K562 (cell line): ENCODE measurements at regions of chr1 and their contacts with region 1.

Region 1: DNA sequence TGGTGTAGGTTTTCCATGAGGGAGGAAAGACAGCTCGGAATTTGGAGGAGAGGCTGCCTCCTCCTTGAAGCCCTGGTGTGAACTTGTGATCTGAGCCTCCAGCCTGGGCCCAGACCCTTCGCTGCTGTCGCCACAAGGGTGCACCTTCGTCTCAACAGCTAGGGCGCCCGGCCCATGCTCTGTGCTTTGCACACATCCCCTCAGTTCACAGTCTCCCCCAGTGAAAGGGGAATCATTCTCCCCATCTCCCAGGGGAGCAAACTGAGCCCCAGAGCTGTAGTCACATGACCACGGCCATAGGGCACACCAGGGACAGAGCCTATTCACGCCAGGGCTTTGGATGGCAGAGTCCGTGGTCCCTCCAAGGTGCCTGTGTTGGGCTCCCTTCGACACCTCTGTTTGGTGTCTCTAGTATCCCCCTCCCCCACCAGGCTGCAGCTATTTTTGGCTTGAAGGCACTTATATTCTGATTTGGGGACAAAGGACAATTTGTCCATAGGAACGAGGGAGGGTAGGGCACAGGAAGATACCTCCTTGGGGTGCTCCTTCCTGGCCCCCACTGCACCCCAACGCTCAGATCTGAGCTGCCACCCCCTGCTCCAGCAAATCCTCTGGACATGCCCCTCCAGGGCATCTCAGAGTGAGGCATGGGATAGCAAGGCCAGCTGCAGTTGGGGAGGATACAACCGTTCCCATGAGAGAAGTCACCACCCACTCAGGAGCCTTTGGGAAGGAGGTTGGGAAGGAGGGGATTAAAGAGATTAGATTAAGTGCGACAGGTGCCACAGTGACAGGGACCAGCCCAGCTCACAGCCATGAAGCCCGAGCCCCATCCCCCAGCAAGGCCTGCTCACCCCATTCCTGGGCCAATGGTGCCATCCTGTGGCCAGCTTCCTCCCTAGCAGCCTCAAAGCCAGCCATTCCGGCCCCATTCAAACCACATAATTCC is 15.7 kb downstream of the MATN1 start:
- DNase-seq: peak; percentile 84 to 92 (median 91)
- ATAC-seq: peak; percentile 97
- H3K4me3 ChIP-seq: no peak overlapping the region
- H3K27ac ChIP-seq: no peak overlapping the region
- H3K4me1 ChIP-seq: peaks cover 0 to 6% of the 10 kb centered on the region in 2 experiments; a peak in 2 of 5 replicates
- H3K27me3 ChIP-seq: peaks cover 10 to 48% of the 10 kb centered on the region in 2 experiments; a peak in 4 of 5 replicates
- CTCF ChIP-seq: peak; percentile 93 to 98 (median 98)
- EP300 ChIP-seq: peak; percentile 36
- POLR2A ChIP-seq: no peak
- RAD21 ChIP-seq: peak; percentile 98 to 99

Region 2: DNA sequence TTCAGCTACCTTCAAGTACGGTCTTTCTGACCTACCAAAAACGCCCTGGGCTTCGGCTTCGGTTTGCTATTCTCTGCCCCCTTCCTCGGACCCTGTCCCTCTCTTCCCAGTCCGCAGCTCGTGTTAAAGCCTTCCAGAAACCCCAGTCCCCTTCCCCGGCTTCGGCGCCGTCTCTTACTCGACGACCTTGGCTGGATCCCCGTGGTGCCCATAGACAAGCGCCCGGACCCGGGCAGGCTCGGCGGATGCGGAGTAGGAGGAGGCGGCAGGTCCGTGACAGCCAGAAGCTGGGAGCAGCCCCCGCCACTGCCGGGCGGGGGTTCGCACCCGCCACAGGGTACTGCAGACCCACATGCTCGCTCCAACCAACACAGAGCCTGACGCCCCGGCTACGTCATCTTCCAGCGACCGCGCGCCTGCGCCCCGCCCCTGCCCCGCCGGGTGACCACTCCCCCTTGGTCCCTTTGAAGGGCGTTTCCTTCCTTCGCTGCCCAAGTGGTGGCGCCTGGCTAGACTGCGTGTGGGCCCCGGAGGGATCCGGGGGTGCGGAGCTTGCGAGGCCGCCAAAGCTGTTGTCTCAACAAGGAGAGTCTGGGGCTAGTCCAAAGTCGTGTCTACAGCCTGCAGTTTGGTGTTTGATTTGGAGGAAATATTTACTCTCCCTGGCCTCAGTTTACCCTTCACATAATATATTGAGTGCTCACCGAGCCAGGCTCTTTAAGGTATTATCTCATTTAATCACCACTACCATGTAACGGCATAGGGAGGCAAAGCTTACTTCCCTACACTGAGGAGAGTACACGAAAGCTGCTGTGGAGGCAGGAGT is 1476.9 kb before region 1 on chr1 and contains the start of gene MECR:
- CTCF ChIA-PET with region 1: interaction called, 5 read pairs
- POLR2A ChIA-PET with region 1: no interaction called
- in situ Hi-C with region 1: loop called (anchors 10 kb)
- intact Hi-C with region 1: no loop called
- DNase-seq: peak; percentile 98 to 99 (median 99)
- ATAC-seq: peak; percentile 97
- H3K4me3 ChIP-seq: peak within 1 kb of the TSS; percentile 78
- H3K27ac ChIP-seq: peak within 1 kb of the TSS; percentile 75
- H3K4me1 ChIP-seq: peaks cover 7 to 12% of the 10 kb centered on the region in 2 experiments; a peak in 3 of 5 replicates
- H3K27me3 ChIP-seq: no peaks in the 10 kb centered on the region
- CTCF ChIP-seq: peak; percentile 42 to 58 (median 47)
- EP300 ChIP-seq: peak; percentile 3; the same call in 1 of the 2 replicates
- POLR2A ChIP-seq: peak; percentile 91
- RAD21 ChIP-seq: peak in 1 of 2 experiments; percentile 3; a peak in 1 of 4 replicates
- polyA plus RNA-seq, gene MECR: 10.4 to 18.0 TPM

Region 3: GRCh38 chr1:29235955-29236684 is 1471.6 kb before region 1 on chr1 and contains the start of gene PTPRU:
- CTCF ChIA-PET with region 1: interaction called, 5 read pairs
- POLR2A ChIA-PET with region 1: no interaction called
- in situ Hi-C with region 1: no loop called
- intact Hi-C with region 1: loop called (anchors 5 kb)
- DNase-seq: peak; percentile 85 to 97 (median 94)
- ATAC-seq: peak; percentile 96
- H3K4me3 ChIP-seq: peak within 1 kb of the TSS; percentile 44
- H3K27ac ChIP-seq: no peak within 1 kb of the TSS
- H3K4me1 ChIP-seq: peaks cover 5 to 27% of the 10 kb centered on the region in 2 experiments; a peak in 3 of 5 replicates
- H3K27me3 ChIP-seq: peaks cover 23 to 30% of the 10 kb centered on the region in 2 experiments; a peak in 4 of 5 replicates
- CTCF ChIP-seq: peak; percentile 57 to 95 (median 91)
- EP300 ChIP-seq: no peak
- POLR2A ChIP-seq: no peak
- RAD21 ChIP-seq: peak; percentile 93 to 98
- polyA plus RNA-seq, gene PTPRU: 0.01 to 0.03 TPM

Region 4: GRCh38 chr1:29379443-29380073 is 1328.1 kb before region 1 on chr1:
- CTCF ChIA-PET with region 1: interaction called, 3 read pairs
- POLR2A ChIA-PET with region 1: no interaction called
- in situ Hi-C with region 1: no loop called
- intact Hi-C with region 1: loop called (anchors 10 kb)
- DNase-seq: peak; percentile 60 to 70 (median 64)
- ATAC-seq: peak; percentile 71
- H3K4me3 ChIP-seq: no peak overlapping the region
- H3K27ac ChIP-seq: no peak overlapping the region
- H3K4me1 ChIP-seq: no peaks in the 10 kb centered on the region
- H3K27me3 ChIP-seq: peaks cover 0 to 13% of the 10 kb centered on the region in 2 experiments; a peak in 1 of 5 replicates
- CTCF ChIP-seq: peak; percentile 85 to 95 (median 88)
- EP300 ChIP-seq: 0 out of 2 replicates have a peak, but pooled peaks have one; percentile 27
- POLR2A ChIP-seq: no peak
- RAD21 ChIP-seq: peak; percentile 86 to 98

Region 5: GRCh38 chr1:29513357-29513756 is 1194.3 kb before region 1 on chr1:
- CTCF ChIA-PET with region 1: no interaction called
- POLR2A ChIA-PET with region 1: no interaction called
- in situ Hi-C with region 1: no loop called
- intact Hi-C with region 1: loop called (anchors 10 kb)
- DNase-seq: peak; percentile 72 to 83 (median 74)
- ATAC-seq: peak; percentile 100
- H3K4me3 ChIP-seq: no peak overlapping the region
- H3K27ac ChIP-seq: no peak overlapping the region
- H3K4me1 ChIP-seq: no peaks in the 10 kb centered on the region
- H3K27me3 ChIP-seq: peaks cover 0 to 4% of the 10 kb centered on the region in 2 experiments; a peak in 1 of 5 replicates
- CTCF ChIP-seq: peak; percentile 70 to 87 (median 78)
- EP300 ChIP-seq: no peak
- POLR2A ChIP-seq: no peak
- RAD21 ChIP-seq: peak; percentile 81 to 84

Region 6: DNA sequence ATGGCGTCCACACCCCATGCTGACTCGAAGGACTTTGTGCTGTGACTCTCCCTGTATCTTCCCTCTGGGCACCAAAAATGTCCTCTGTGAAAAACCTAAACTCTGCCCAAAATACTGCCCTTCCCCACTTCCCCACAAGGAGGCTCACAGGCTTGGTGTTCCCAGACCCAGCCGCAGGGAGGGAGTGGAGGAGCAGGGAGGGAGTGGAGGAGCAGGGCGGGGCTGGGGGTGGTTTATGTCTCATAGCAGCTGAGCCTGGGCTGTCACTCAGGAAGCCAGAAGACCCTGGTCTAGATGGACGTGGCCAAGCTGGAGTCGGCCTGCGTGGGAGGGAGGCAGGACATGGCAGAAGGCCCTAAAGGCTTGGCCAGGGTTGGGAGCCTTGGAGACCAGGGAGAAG is 1009.7 kb before region 1 on chr1:
- CTCF ChIA-PET with region 1: interaction called, 5 read pairs
- POLR2A ChIA-PET with region 1: no interaction called
- in situ Hi-C with region 1: no loop called
- intact Hi-C with region 1: loop called (anchors 10 kb)
- DNase-seq: peak; percentile 69 to 75 (median 72)
- ATAC-seq: peak; percentile 99
- H3K4me3 ChIP-seq: no peak overlapping the region
- H3K27ac ChIP-seq: no peak overlapping the region
- H3K4me1 ChIP-seq: no peaks in the 10 kb centered on the region
- H3K27me3 ChIP-seq: peaks cover 0 to 25% of the 10 kb centered on the region in 2 experiments; a peak in 2 of 5 replicates
- CTCF ChIP-seq: peak; percentile 68 to 94 (median 83)
- EP300 ChIP-seq: no peak
- POLR2A ChIP-seq: no peak
- RAD21 ChIP-seq: peak; percentile 50 to 65

Region 7: GRCh38 chr1:30407865-30408580 is 299.7 kb before region 1 on chr1:
- CTCF ChIA-PET with region 1: no interaction called
- POLR2A ChIA-PET with region 1: no interaction called
- in situ Hi-C with region 1: no loop called
- intact Hi-C with region 1: loop called (anchors 5 kb)
- DNase-seq: no peak
- ATAC-seq: no peak
- H3K4me3 ChIP-seq: no peak overlapping the region
- H3K27ac ChIP-seq: no peak overlapping the region
- H3K4me1 ChIP-seq: no peaks in the 10 kb centered on the region
- H3K27me3 ChIP-seq: peaks cover 4 to 26% of the 10 kb centered on the region in 2 experiments; a peak in 3 of 5 replicates
- CTCF ChIP-seq: no peak
- EP300 ChIP-seq: no peak
- POLR2A ChIP-seq: no peak
- RAD21 ChIP-seq: no peak

Region 8: GRCh38 chr1:30743584-30744059 is 35.9 kb after region 1 on chr1:
- CTCF ChIA-PET with region 1: no interaction called
- POLR2A ChIA-PET with region 1: no interaction called
- in situ Hi-C with region 1: no loop called
- intact Hi-C with region 1: no loop called
- DNase-seq: no peak
- ATAC-seq: no peak; the same call in 2 of the 3 replicates
- H3K4me3 ChIP-seq: no peak overlapping the region
- H3K27ac ChIP-seq: no peak overlapping the region
- H3K4me1 ChIP-seq: peaks cover 55 to 56% of the 10 kb centered on the region in 2 experiments
- H3K27me3 ChIP-seq: no peaks in the 10 kb centered on the region
- CTCF ChIP-seq: no peak
- EP300 ChIP-seq: no peak
- POLR2A ChIP-seq: no peak
- RAD21 ChIP-seq: no peak

Region 9: DNA sequence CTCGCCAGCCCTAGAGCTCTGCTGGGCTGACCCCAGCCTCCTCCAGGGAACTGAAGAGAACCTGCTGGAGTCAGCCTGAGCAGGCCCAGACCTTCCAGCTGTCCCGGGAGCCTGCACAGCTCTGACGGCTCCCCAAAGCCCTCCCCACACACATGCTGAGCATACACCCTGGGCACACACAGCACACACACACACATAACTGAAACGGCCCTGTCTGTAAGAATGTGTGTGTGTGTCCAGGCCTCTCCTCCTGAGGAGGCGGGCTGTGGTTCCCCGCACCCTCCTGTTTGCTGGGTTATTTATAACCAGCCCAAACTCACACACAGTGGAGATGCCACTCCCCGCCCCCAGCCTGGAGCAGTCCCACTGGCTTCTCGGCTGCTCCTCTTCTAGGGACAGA is 180.7 kb after region 1 on chr1:
- CTCF ChIA-PET with region 1: no interaction called
- POLR2A ChIA-PET with region 1: no interaction called
- in situ Hi-C with region 1: no loop called
- intact Hi-C with region 1: no loop called
- DNase-seq: peak in 2 of 4 experiments; percentile 48 to 58
- ATAC-seq: peak; percentile 70
- H3K4me3 ChIP-seq: no peak overlapping the region
- H3K27ac ChIP-seq: peak overlapping the region; percentile 38; the same call in 2 of the 3 replicates
- H3K4me1 ChIP-seq: peaks cover 41 to 47% of the 10 kb centered on the region in 2 experiments
- H3K27me3 ChIP-seq: no peaks in the 10 kb centered on the region
- CTCF ChIP-seq: no peak
- EP300 ChIP-seq: peak; percentile 33; the same call in 1 of the 2 replicates
- POLR2A ChIP-seq: no peak
- RAD21 ChIP-seq: no peak

Region 10: DNA sequence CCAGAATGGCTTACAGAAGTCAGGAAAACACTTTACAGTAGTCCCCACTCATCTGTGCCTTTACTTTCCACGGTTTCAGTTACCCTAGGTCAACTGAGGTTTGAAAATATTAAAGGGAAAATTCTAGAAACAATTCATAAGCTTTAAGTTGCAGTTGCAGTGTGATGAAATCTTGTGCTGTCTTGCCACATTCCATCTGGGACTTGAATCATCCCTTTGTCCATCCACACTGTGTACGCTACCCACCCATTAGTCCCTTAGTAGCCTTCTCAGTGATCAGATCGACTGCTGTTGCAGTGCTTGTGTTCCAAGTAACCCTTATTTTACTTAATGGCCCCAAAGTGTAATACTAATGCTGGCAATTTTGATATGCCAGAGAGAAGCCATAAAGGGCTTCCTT is 619.7 kb after region 1 on chr1:
- CTCF ChIA-PET with region 1: no interaction called
- POLR2A ChIA-PET with region 1: no interaction called
- in situ Hi-C with region 1: no loop called
- intact Hi-C with region 1: no loop called
- DNase-seq: no peak
- ATAC-seq: 0 out of 3 replicates have a peak, but pooled peaks have one; percentile 37
- H3K4me3 ChIP-seq: no peak overlapping the region
- H3K27ac ChIP-seq: no peak overlapping the region
- H3K4me1 ChIP-seq: peaks cover 0 to 10% of the 10 kb centered on the region in 2 experiments; a peak in 2 of 5 replicates
- H3K27me3 ChIP-seq: no peaks in the 10 kb centered on the region
- CTCF ChIP-seq: no peak
- EP300 ChIP-seq: no peak
- POLR2A ChIP-seq: no peak
- RAD21 ChIP-seq: no peak